PC-9 (cell line): ENCODE measurements at regions of chr15 and their contacts with region 1.

Region 1: GRCh38 chr15:89472785-89473256 is 23.6 kb downstream of the RHCG start:
- DNase-seq: peak; percentile 42 to 69
- H3K4me3 ChIP-seq: no peak overlapping the region
- H3K27ac ChIP-seq: no peak overlapping the region
- H3K4me1 ChIP-seq: peaks cover 13% of the 10 kb centered on the region; the same call in 1 of the 2 replicates
- H3K27me3 ChIP-seq: peaks cover 20% of the 10 kb centered on the region
- CTCF ChIP-seq: peak; percentile 89

Region 2: DNA sequence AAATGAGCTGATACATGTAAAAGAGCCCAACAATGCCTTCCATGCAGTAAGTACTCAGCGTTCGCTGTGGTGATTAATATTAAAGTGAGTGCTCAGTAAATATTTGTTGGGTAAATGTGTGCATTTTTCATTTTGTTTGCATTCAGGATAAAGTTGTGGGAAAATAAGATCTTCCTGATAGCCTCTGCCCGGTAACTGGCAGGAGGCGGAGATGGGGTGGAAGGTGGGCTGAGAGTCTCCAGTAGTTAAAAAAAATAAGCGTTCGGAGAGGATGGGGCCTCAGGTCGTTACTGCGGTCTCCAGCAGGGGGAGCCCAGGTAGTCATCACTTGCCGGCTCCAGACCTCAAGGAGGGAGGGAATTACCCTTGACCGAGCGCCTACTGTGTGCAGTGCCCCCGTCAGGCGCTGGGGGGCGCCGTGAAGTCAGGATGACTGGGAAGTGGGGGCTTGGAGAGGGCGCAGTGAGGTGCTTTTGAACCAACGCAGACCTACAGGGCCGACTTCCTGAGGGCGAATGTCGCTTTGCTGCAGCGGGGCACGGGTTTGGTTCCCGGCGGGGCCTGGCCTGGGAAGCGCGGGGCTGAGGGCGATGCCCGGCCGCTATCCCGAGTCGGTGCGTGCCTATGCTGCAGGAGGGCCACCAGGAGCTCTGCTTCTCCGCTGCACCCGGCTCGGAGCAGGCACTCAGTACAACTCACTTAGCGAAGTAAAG is 56.5 kb before region 1 on chr15:
- CTCF ChIA-PET with region 1: interaction called, 3 read pairs
- POLR2A ChIA-PET with region 1: no interaction called
- intact Hi-C with region 1: loop called (anchors 1 kb)
- DNase-seq: peak; percentile 56 to 60
- H3K4me3 ChIP-seq: no peak overlapping the region
- H3K27ac ChIP-seq: no peak overlapping the region
- H3K4me1 ChIP-seq: no peaks in the 10 kb centered on the region
- H3K27me3 ChIP-seq: peaks cover 69% of the 10 kb centered on the region
- CTCF ChIP-seq: peak; percentile 94

Region 3: DNA sequence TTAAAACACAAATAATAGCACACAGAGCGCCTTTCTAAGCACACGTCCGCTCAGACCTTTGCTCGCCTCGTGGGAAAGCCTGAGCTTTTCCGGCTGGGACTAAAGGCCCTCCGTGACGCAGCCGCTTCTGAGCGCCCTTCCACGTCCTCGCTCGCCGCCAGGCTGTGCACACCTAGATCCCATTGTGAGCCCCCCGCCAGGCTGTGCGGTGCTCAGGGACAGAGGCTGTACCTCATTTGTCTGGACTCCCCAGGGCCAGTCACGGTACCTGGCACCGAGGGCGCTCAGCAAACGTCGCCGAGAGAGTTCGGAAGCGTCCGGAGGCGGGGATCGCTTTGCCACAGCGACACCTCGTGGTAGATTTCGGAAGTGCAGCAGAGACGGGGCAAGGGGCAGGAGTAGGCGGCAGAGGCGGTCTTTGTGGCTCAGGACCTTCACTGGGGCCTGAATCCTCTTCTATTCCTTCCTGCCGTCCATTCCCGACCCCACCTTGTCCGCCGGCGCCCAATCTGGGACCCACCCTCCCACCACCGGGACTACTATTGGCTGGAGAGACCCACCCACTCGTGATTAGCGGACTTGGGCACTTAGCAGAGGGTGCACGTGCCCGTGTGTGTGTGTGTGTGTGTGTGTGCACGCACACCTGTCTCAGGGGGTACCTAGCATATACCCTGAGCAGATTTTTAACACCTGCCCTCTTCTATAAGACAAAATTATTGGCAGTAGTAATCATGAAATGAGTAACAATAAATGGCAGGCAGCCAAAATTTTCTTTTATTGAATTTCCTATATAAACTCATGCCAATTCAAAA is 42.1 kb before region 1 on chr15:
- CTCF ChIA-PET with region 1: no interaction called
- POLR2A ChIA-PET with region 1: no interaction called
- intact Hi-C with region 1: loop called (anchors 5 kb)
- DNase-seq: peak in 1 of 2 experiments; percentile 82
- H3K4me3 ChIP-seq: peak overlapping the region; percentile 54
- H3K27ac ChIP-seq: no peak overlapping the region
- H3K4me1 ChIP-seq: peaks cover 12% of the 10 kb centered on the region; the same call in 1 of the 2 replicates
- H3K27me3 ChIP-seq: peaks cover 5% of the 10 kb centered on the region
- CTCF ChIP-seq: peak; percentile 97

Region 4: GRCh38 chr15:89442671-89443307 is 30.0 kb before region 1 on chr15:
- CTCF ChIA-PET with region 1: no interaction called
- POLR2A ChIA-PET with region 1: no interaction called
- intact Hi-C with region 1: loop called (anchors 1 kb)
- DNase-seq: peak in 1 of 2 experiments; percentile 56
- H3K4me3 ChIP-seq: no peak overlapping the region
- H3K27ac ChIP-seq: no peak overlapping the region
- H3K4me1 ChIP-seq: no peaks in the 10 kb centered on the region
- H3K27me3 ChIP-seq: peaks cover 28% of the 10 kb centered on the region
- CTCF ChIP-seq: peak; percentile 84

Region 5: DNA sequence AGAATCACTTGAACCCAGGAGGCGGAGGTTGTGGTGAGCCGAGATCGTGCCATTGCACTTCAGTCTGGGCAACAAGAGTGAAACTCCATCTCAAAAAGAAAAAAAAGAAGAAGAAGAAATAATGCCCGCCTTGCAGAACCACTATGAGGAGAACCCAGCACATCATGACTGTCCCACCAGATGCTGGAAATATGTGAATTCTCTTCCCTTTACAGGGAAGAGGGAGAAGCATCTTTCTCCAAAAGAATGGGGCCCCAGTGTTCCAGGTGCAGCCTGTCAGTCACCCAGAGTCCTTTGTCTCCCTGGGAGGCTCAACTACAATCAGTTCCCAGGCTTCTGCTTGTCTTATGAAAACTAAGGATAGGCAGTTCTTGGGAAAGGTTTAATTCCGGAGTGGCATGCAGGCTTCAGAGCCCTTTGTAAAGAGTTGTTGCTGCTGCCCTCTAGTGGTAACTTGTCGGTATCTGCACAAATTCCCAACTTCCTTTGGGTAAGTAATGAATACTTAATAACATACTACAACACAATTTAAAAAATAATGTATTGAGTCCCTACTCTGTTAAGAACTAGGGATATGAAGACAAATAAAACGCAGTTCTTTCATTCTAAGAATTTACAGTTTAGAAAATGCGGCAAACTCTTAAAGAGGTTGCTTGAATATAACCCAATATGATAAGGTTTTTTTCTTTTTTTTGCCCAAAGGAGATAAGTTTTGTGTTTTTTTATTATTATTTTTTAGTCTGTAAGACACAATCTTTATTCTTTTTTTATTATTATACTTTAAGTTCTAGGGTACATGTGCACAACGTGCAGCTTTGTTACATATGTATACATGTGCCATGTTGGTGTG is 83.8 kb after region 1 on chr15:
- CTCF ChIA-PET with region 1: no interaction called
- POLR2A ChIA-PET with region 1: no interaction called
- intact Hi-C with region 1: no loop called
- DNase-seq: peak; percentile 56 to 77
- H3K4me3 ChIP-seq: no peak overlapping the region
- H3K27ac ChIP-seq: no peak overlapping the region
- H3K4me1 ChIP-seq: peaks cover 4% of the 10 kb centered on the region
- H3K27me3 ChIP-seq: no peaks in the 10 kb centered on the region
- CTCF ChIP-seq: peak; percentile 85